Mammary epithelial cell (primary cell): ENCODE measurements at regions of chr14 and their contacts with region 1.

Region 1: GRCh38 chr14:94998670-94999072 is 158.7 kb downstream of the DICER1 start:
- DNase-seq: no peak
- H3K4me3 ChIP-seq: no peak overlapping the region
- H3K27ac ChIP-seq: no peak overlapping the region
- H3K4me1 ChIP-seq: no peaks in the 10 kb centered on the region
- H3K27me3 ChIP-seq: no peaks in the 10 kb centered on the region
- CTCF ChIP-seq: no peak

Region 2: GRCh38 chr14:94748667-94749347 is 249.9 kb before region 1 on chr14:
- CTCF ChIA-PET with region 1: no interaction called
- dilution Hi-C with region 1: no loop called
- in situ Hi-C with region 1: no loop called
- intact Hi-C with region 1: loop called (anchors 10 kb)
- DNase-seq: no peak
- H3K4me3 ChIP-seq: no peak overlapping the region
- H3K27ac ChIP-seq: no peak overlapping the region
- H3K4me1 ChIP-seq: no peaks in the 10 kb centered on the region
- H3K27me3 ChIP-seq: no peaks in the 10 kb centered on the region
- CTCF ChIP-seq: peak; percentile 35 to 78

Region 3: GRCh38 chr14:95068080-95068479 is 69.4 kb after region 1 on chr14:
- CTCF ChIA-PET with region 1: no interaction called
- dilution Hi-C with region 1: no loop called
- in situ Hi-C with region 1: no loop called
- intact Hi-C with region 1: no loop called
- DNase-seq: no peak
- H3K4me3 ChIP-seq: no peak overlapping the region
- H3K27ac ChIP-seq: no peak overlapping the region
- H3K4me1 ChIP-seq: no peaks in the 10 kb centered on the region
- H3K27me3 ChIP-seq: no peaks in the 10 kb centered on the region
- CTCF ChIP-seq: no peak

Region 4: GRCh38 chr14:95078828-95079227 is 80.2 kb after region 1 on chr14:
- CTCF ChIA-PET with region 1: no interaction called
- dilution Hi-C with region 1: no loop called
- in situ Hi-C with region 1: no loop called
- intact Hi-C with region 1: no loop called
- DNase-seq: no peak
- H3K4me3 ChIP-seq: no peak overlapping the region
- H3K27ac ChIP-seq: no peak overlapping the region
- H3K4me1 ChIP-seq: no peaks in the 10 kb centered on the region
- H3K27me3 ChIP-seq: no peaks in the 10 kb centered on the region
- CTCF ChIP-seq: no peak